Psoas muscle (tissue), 8 donors: ENCODE measurements at regions of chr16 and their contacts with region 1.

Region 1: GRCh38 chr16:58129097-58129936 is at the start of gene CFAP20:
- DNase-seq: peak; percentile 99
- ATAC-seq: peak; percentile 98 to 99 (median 98)
- H3K4me3 ChIP-seq: peak within 1 kb of the TSS; percentile 86
- H3K27ac ChIP-seq: peak within 1 kb of the TSS; percentile 86
- H3K4me1 ChIP-seq: peaks cover 29% of the 10 kb centered on the region
- H3K27me3 ChIP-seq: no peaks in the 10 kb centered on the region
- CTCF ChIP-seq: no peak
- total RNA-seq, gene CFAP20: 5.6 to 11.5 (median 8.6) TPM

Region 2: DNA sequence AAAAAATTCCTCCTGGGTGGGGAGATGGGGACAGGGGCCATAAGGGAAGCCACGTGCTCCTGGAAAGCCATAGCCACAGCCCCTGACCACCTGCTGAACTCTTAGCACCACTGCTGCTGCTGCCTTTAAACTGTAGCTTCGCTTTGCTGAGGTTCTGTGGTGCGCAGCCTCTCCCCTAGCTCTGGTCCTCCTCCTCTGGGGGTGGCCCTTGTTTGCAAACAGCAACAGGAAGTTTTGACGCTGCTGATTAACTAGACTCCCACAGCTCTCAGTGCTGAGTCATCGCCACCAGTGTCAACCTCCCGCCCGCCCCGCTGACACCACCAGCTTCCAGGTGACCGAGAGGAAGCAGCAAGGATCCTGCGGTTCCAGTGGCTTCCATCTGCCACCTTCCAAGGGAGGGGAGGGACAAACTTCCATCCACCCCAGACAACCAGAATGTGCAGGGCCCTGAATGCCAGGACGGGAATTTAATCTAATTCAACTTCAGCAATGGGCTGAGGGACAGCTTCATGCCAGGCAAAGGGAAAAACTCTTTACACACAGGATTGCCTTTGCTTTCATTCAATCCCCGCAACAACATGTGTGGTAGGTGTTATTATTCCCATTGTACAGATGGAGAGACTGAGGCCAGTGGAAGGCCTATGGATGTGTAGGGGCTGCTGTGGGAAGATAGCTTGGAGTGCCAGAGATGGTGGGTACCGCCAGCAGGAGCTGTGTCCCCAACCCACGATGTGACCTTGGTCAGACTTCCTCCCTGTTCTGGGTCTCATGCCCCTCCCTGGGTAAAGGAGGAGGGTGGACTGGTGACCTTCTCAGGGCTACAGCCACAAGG is 318.9 kb before region 1 on chr16:
- intact Hi-C with region 1: loop called in 1 of 2 experiments (anchors 5 kb)
- DNase-seq: peak; percentile 78 to 84
- ATAC-seq: peak; percentile 71 to 81 (median 74)
- H3K4me3 ChIP-seq: peak overlapping the region; percentile 0
- H3K27ac ChIP-seq: peak overlapping the region; percentile 48
- H3K4me1 ChIP-seq: peaks cover 27% of the 10 kb centered on the region
- H3K27me3 ChIP-seq: no peaks in the 10 kb centered on the region
- CTCF ChIP-seq: no peak

Region 3: DNA sequence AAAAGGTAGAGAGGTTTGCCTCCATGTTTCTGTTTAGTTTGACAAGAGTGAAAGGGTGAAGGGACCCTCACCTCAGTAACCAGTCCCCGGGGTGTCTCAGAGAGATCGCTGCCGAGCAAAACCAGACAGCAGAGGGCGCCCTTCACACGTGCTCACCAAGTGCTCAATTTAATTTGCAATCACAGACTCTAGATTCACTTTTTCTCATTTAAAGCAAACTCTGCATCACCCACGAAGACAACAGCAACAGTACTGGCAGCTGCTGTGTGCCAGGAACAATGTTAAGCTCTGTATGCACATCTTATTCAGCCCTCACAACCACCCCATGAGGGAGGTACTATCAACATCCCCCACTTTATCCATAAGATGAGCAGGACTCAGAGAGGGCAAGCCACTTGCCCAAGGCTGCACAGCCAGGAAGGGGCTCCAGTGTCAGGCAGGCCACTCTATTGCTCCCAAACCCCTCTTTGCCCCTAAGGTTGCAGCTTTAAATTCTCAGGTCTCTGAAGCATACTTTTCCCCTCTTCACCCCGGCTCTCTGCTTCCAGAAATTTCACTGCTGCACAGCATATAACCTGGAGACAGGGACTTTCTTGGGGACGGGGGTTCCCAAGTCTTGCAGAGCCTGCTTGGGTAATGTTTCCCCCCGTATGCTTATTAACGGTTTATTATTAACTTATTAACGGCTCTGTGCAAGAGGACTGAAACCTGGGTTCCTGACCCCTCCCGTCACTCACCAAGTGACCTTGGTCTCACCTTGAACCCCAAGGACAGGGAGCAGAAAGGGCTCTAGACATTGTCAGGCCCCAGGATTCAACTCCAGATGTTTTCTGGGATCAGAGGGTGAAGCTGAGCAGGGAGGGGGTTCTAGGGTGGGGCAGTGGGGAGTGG is 229.3 kb before region 1 on chr16:
- intact Hi-C with region 1: loop called in 1 of 2 experiments (anchors 10 kb)
- DNase-seq: peak; percentile 66 to 76
- ATAC-seq: peak in 3 of 4 donors; percentile 72 to 80 (median 76)
- H3K4me3 ChIP-seq: no peak overlapping the region
- H3K27ac ChIP-seq: no peak overlapping the region
- H3K4me1 ChIP-seq: no peaks in the 10 kb centered on the region
- H3K27me3 ChIP-seq: peaks cover 0 to 29% (median 0%) of the 10 kb centered on the region in 3 donors
- CTCF ChIP-seq: peak; percentile 87

Region 4: GRCh38 chr16:58020628-58021139 is 108.6 kb before region 1 on chr16:
- intact Hi-C with region 1: loop called in 1 of 2 experiments (anchors 5 kb)
- DNase-seq: peak; percentile 54 to 74
- ATAC-seq: peak in 2 of 4 donors; percentile 44 to 49
- H3K4me3 ChIP-seq: no peak overlapping the region
- H3K27ac ChIP-seq: no peak overlapping the region
- H3K4me1 ChIP-seq: peaks cover 12% of the 10 kb centered on the region
- H3K27me3 ChIP-seq: no peaks in the 10 kb centered on the region
- CTCF ChIP-seq: peak; percentile 75

Region 5: DNA sequence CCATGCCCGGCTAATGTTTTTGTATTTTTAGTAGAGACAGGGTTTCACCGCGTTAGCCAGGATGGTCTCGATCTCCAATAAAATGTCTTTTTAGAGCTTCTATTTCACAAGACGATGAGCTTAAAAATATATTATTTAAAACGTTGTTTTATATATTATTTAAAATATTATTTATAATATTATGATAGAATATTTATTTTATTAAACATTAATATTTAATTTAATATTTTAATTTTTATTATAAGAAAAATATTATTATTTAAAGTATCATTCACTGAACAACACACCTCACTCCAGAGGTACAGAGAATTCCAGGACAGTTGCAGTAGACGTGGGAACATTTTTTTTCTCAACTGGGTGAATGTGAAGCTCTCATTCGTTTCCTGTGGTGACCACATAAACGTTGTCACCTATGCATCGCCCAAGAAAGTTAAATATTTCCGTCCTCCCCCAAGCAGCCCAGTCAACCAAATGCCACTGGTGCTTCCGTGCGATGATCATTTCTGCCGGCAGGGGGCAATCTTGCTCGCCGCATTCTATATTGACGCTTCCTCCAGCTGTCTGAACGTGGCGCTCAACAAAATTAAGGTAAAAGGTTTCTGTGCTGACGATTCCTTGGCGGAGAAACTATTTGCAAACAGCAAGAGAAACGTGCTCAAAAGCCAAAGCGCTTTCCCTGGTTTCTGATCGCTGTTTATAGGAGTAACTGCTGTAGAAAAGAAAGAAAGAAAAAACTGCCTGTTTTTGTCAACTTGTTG is 207.2 kb after region 1 on chr16:
- intact Hi-C with region 1: no loop called
- DNase-seq: peak; percentile 80 to 85
- ATAC-seq: peak; percentile 73 to 93 (median 80)
- H3K4me3 ChIP-seq: peak overlapping the region; percentile 48
- H3K27ac ChIP-seq: no peak overlapping the region
- H3K4me1 ChIP-seq: no peaks in the 10 kb centered on the region
- H3K27me3 ChIP-seq: no peaks in the 10 kb centered on the region
- CTCF ChIP-seq: peak; percentile 94